Mammary epithelial cell (primary cell): ENCODE measurements at regions of chr4 and their contacts with region 1.

Region 1: DNA sequence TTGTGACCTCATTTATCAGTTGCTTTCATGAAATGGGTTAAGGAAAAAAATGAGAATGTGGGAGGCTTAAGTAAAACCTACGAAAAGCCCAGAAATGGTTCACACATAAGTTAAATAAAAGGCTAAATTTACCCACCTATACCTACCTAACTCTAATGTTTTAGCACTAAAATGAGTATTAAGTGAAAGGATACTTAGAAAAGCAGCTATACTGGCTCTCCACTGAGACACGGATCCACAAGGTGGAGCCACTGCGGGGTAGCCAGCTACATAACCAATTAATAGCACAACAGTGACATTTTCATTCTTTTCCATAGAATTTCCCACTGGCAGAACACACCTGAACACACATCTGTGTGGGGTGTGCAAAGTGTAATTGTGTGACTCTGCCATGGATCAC is 101.9 kb downstream of the MAML3 start:
- DNase-seq: peak; percentile 29
- H3K4me3 ChIP-seq: no peak overlapping the region
- H3K27ac ChIP-seq: no peak overlapping the region
- H3K4me1 ChIP-seq: peaks cover 7% of the 10 kb centered on the region
- H3K27me3 ChIP-seq: no peaks in the 10 kb centered on the region
- CTCF ChIP-seq: peak; percentile 49 to 80

Region 2: GRCh38 chr4:139603576-139604387 is 448.3 kb before region 1 on chr4:
- CTCF ChIA-PET with region 1: no interaction called
- dilution Hi-C with region 1: no loop called
- in situ Hi-C with region 1: no loop called
- intact Hi-C with region 1: loop called (anchors 2 kb)
- DNase-seq: peak; percentile 55
- H3K4me3 ChIP-seq: no peak overlapping the region
- H3K27ac ChIP-seq: no peak overlapping the region
- H3K4me1 ChIP-seq: no peaks in the 10 kb centered on the region
- H3K27me3 ChIP-seq: no peaks in the 10 kb centered on the region
- CTCF ChIP-seq: peak; percentile 62 to 73

Region 3: DNA sequence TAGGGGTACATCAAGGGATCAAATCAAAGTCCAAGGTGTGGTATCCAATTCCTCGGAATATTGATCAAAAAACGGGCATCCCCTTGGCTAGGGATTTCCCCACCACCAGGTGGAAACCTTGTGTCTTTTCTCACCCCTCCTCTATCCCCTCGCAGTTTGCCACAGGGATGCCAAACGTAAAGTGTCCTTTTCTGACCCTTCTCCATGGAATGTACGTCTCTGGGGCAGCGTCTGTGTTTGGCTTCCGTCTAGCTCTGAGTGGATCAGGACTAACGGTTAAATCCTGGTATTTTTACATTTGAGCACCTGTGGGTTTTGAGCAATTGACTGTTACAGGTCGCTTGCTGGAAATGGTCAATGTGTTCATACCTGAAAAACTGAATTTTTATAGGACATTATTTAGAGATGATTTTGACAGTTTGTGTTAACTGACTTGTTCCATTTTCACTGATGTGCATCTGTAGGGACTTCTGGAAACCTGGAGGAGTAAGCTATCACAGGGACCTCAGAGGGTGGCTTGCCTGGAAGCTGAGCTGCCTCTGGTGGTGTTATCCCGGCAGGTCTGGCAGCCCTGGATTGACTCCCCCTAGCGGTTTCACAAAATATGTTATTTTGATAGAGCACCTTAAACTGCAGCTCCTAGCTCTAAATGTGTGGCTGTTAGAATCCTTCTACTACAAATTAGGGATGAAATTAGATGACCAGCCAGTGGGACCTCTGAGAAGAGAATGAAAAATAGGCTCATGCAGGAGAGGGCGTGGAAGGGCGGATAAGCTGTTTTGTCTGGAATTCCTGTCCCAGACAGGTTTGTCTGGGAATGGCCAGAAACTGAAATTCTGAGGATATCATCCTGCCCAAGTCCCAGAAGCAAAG is 395.2 kb before region 1 on chr4:
- CTCF ChIA-PET with region 1: interaction called, 3 read pairs
- dilution Hi-C with region 1: no loop called
- in situ Hi-C with region 1: no loop called
- intact Hi-C with region 1: loop called (anchors 1 kb)
- DNase-seq: peak; percentile 73
- H3K4me3 ChIP-seq: peak overlapping the region in 1 of 3 experiments; percentile 14
- H3K27ac ChIP-seq: peak overlapping the region; percentile 75
- H3K4me1 ChIP-seq: peaks cover 28% of the 10 kb centered on the region
- H3K27me3 ChIP-seq: no peaks in the 10 kb centered on the region
- CTCF ChIP-seq: peak; percentile 94 to 96

Region 4: DNA sequence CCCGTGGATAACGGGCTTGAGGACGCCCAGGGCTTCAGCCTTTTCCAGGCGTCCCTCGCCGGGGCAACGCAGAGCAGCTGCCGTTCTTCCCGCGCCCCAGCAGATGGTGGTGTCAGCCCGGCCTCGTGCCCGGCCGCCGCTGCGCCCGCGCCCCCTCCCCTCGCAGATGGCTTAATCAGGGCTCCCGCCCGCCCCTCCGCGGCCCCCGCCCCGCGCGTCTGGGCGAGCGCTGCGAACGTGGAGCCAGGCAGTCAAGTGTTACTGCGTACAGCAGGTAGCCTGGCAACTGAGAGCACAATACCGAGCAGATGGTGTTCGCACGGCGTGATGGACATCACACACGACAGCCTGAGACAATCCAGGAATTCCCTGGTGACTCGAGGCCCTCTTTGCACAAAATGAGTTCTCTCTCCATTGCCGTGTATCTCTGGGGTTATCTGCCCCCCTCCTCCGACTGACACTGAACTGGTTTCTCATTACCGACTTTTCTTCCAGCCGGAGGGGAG is 317.1 kb before region 1 on chr4:
- CTCF ChIA-PET with region 1: no interaction called
- dilution Hi-C with region 1: no loop called
- in situ Hi-C with region 1: no loop called
- intact Hi-C with region 1: loop called (anchors 1 kb)
- DNase-seq: peak; percentile 64
- H3K4me3 ChIP-seq: peak overlapping the region; percentile 35 to 36 (median 35)
- H3K27ac ChIP-seq: no peak overlapping the region
- H3K4me1 ChIP-seq: peaks cover 9% of the 10 kb centered on the region
- H3K27me3 ChIP-seq: peaks cover 12% of the 10 kb centered on the region
- CTCF ChIP-seq: peak; percentile 22 to 67

Region 5: DNA sequence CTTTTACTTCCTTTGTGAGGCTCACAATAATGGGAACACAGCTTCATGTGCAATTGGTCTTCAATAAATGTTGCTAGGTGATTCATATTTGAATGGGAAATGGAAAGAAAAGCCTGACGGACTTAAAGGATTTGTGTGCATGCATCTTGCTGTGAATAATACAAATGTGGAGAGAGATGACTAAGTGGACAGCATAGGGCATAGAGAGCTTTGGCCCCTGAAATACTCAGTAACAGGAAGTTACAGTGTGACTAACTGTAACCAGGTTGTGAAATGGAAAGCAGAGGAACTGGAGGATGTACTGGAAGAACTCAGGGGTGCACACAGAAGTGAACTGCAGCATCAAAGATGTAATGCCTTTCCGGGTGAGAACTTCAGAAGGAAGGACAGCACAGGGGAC is 179.8 kb before region 1 on chr4:
- CTCF ChIA-PET with region 1: no interaction called
- dilution Hi-C with region 1: no loop called
- in situ Hi-C with region 1: no loop called
- intact Hi-C with region 1: loop called (anchors 5 kb)
- DNase-seq: peak; percentile 94
- H3K4me3 ChIP-seq: no peak overlapping the region
- H3K27ac ChIP-seq: peak overlapping the region; percentile 66
- H3K4me1 ChIP-seq: peaks cover 18% of the 10 kb centered on the region
- H3K27me3 ChIP-seq: no peaks in the 10 kb centered on the region
- CTCF ChIP-seq: no peak

Region 6: DNA sequence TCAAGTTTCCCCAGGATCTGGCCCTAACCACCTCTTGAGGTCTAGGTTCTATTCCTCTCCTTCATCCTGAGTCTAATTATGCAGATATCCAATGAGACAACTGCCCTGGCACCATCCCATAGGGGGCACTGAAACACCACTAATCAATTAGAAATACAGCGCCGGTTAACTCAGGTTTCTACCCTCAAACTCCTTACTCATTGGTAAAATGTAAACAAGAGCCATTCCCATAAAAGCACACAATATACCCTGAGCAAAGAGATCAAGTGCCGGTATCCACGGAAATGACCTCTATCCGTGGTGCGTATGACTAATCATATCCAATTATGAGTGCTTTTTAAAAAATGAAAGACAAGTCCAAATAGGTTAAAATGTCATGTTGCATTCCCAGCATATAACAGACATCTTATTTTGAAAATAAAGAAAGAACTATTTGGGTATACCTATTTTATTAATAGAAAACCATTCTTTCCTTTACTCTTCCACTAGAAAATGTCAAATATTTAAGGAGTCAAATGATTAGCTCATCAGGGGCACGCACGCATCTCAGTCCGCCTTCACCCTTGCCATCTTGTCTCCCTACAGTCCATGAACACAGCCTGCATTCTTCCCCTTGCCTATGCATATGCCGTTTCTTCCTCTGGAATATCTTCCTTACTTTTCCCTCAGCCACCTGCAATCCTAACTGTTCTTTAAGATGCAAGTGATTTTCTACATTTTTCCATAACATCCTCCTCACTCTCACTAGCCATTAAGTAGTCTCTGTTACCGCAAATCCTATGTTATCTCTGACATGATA is 39.2 kb before region 1 on chr4:
- CTCF ChIA-PET with region 1: no interaction called
- dilution Hi-C with region 1: no loop called
- in situ Hi-C with region 1: no loop called
- intact Hi-C with region 1: loop called (anchors 2 kb)
- DNase-seq: peak; percentile 71
- H3K4me3 ChIP-seq: no peak overlapping the region
- H3K27ac ChIP-seq: no peak overlapping the region
- H3K4me1 ChIP-seq: no peaks in the 10 kb centered on the region
- H3K27me3 ChIP-seq: peaks cover 2% of the 10 kb centered on the region
- CTCF ChIP-seq: peak; percentile 62 to 64

Region 7: GRCh38 chr4:140095694-140096482 is 43.8 kb after region 1 on chr4:
- CTCF ChIA-PET with region 1: no interaction called
- dilution Hi-C with region 1: no loop called
- in situ Hi-C with region 1: no loop called
- intact Hi-C with region 1: no loop called
- DNase-seq: peak; percentile 80
- H3K4me3 ChIP-seq: no peak overlapping the region
- H3K27ac ChIP-seq: no peak overlapping the region
- H3K4me1 ChIP-seq: peaks cover 77% of the 10 kb centered on the region
- H3K27me3 ChIP-seq: no peaks in the 10 kb centered on the region
- CTCF ChIP-seq: no peak